ENCODE measurements at regions of chr10 and their contacts with region 1.

Region 1: GRCh38 chr10:97234400-97234799 is 48.6 kb upstream of the SLIT1 start:
- DNase-seq: peak; percentile 21
- H3K4me3 ChIP-seq: no peak overlapping the region
- H3K27ac ChIP-seq: no peak overlapping the region
- H3K27me3 ChIP-seq: no peaks in the 10 kb centered on the region
- CTCF ChIP-seq: peak; percentile 68

Region 2: GRCh38 chr10:97037365-97038361 is 196.7 kb before region 1 on chr10:
- CTCF ChIA-PET with region 1: interaction called, 32 read pairs
- POLR2A ChIA-PET with region 1: no interaction called
- DNase-seq: peak; percentile 54
- H3K4me3 ChIP-seq: peak overlapping the region; percentile 56
- H3K27ac ChIP-seq: no peak overlapping the region
- H3K27me3 ChIP-seq: peaks cover 24% of the 10 kb centered on the region
- CTCF ChIP-seq: peak; percentile 87

Region 3: GRCh38 chr10:97196223-97197029 is 38.0 kb before region 1 on chr10:
- CTCF ChIA-PET with region 1: interaction called, 15 read pairs
- POLR2A ChIA-PET with region 1: no interaction called
- DNase-seq: peak; percentile 10
- H3K4me3 ChIP-seq: peak overlapping the region; percentile 61
- H3K27ac ChIP-seq: no peak overlapping the region
- H3K27me3 ChIP-seq: peaks cover 29% of the 10 kb centered on the region
- CTCF ChIP-seq: peak; percentile 83

Region 4: GRCh38 chr10:97222326-97222961 is 12.0 kb before region 1 on chr10:
- CTCF ChIA-PET with region 1: interaction called, 40 read pairs
- POLR2A ChIA-PET with region 1: no interaction called
- DNase-seq: no peak
- H3K4me3 ChIP-seq: no peak overlapping the region
- H3K27ac ChIP-seq: no peak overlapping the region
- H3K27me3 ChIP-seq: no peaks in the 10 kb centered on the region
- CTCF ChIP-seq: no peak

Region 5: DNA sequence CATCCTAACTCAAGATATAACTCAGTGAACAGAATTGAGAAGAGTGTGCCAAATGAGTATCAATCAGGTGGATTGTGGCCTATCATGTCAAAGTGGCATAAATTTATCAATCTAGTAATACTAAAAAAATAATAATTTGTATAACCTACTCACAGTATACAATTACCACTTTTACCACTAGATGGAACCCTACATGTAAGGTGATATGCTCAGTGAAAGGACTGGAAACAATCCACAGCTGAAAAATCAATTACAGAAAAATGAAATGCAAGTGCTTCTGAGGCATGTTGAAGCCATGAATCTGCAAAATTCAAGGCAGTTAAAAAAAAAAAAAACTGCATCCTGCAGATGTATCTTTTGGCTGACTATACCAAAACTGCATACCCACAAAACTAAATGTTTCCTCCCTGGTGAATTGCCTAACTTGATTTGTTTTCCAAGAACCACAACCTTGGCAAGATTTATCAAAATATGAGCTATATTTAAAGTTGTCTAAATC is 44.1 kb after region 1 on chr10:
- CTCF ChIA-PET with region 1: interaction called, 14 read pairs
- POLR2A ChIA-PET with region 1: no interaction called
- DNase-seq: peak; percentile 79
- H3K4me3 ChIP-seq: no peak overlapping the region
- H3K27ac ChIP-seq: no peak overlapping the region
- H3K27me3 ChIP-seq: no peaks in the 10 kb centered on the region
- CTCF ChIP-seq: peak; percentile 60

Region 6: GRCh38 chr10:97425964-97426775 is 191.8 kb after region 1 on chr10 and contains the start of gene PGAM1:
- CTCF ChIA-PET with region 1: no interaction called
- POLR2A ChIA-PET with region 1: no interaction called
- DNase-seq: peak; percentile 91
- H3K4me3 ChIP-seq: peak within 1 kb of the TSS; percentile 95
- H3K27ac ChIP-seq: peak within 1 kb of the TSS; percentile 47
- H3K27me3 ChIP-seq: no peaks in the 10 kb centered on the region
- CTCF ChIP-seq: peak; percentile 63
- polyA plus RNA-seq, gene PGAM1: 452 and 459 TPM in 2 replicates

Region 7: GRCh38 chr10:97792141-97792721 is 557.8 kb after region 1 on chr10:
- CTCF ChIA-PET with region 1: no interaction called
- POLR2A ChIA-PET with region 1: no interaction called
- DNase-seq: peak; percentile 3
- H3K4me3 ChIP-seq: no peak overlapping the region
- H3K27ac ChIP-seq: no peak overlapping the region
- H3K27me3 ChIP-seq: peaks cover 13% of the 10 kb centered on the region
- CTCF ChIP-seq: peak; percentile 88